HepG2 (cell line): ENCODE measurements at regions of chr13 and their contacts with region 1.

Region 1: DNA sequence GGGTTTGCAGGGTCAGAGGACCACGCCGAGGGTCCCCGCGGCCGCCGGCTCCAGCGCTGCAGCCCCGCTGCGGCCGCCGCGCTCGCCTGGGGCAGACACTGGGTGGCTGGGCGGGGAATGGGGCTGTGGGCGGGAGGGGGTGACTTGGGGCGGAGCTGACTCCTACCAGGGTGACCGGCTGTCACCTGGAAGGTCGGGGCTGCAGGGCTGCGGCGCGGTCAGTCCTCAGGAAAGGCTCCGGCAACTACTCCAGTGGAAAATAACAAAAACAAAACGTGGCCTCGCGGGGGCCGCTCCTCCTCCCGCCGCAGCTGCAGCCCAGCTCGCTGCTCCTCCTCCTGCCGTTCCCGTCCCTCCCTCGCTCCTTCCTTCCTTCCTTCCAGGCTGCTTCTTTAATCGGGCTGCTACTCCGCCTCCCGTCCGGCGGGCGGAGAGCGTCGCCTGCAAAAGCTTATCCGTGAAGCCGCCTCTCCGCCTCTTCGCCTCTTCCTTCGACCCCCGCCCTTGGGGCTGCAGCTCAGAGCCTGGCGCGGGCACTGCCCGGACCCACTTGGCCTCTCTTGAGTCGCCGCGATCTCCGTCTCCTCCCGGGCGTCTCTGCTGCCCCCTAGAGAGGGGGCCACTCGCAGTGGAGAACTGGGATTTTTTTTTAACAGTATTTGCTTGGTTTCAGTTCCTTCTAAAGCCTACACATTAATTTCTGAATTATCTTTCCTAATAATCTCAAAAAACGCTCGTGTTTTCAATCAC is at the start of gene TBC1D4:
- DNase-seq: peak; percentile 87
- ATAC-seq: peak; percentile 88
- H3K4me3 ChIP-seq: peak within 1 kb of the TSS; percentile 92 to 94 (median 93)
- H3K27ac ChIP-seq: peak within 1 kb of the TSS; percentile 91
- H3K4me1 ChIP-seq: peaks cover 50% of the 10 kb centered on the region
- H3K27me3 ChIP-seq: no peaks in the 10 kb centered on the region; a peak in 2 of 5 replicates
- CTCF ChIP-seq: peak; percentile 84
- EP300 ChIP-seq: peak in 1 of 2 experiments; percentile 58; a peak in 2 of 4 replicates
- POLR2A ChIP-seq: peak; percentile 51 to 77; a peak in 3 of 4 replicates
- RAD21 ChIP-seq: peak; percentile 85
- total RNA-seq, gene TBC1D4: 35.9 and 55.4 TPM in 2 replicates

Region 2: GRCh38 chr13:74056801-74057542 is 1425.3 kb before region 1 on chr13:
- CTCF ChIA-PET with region 1: no interaction called
- POLR2A ChIA-PET with region 1: no interaction called
- in situ Hi-C with region 1: no loop called
- intact Hi-C with region 1: no loop called
- DNase-seq: no peak
- ATAC-seq: no peak
- H3K4me3 ChIP-seq: no peak overlapping the region
- H3K27ac ChIP-seq: no peak overlapping the region
- H3K4me1 ChIP-seq: 0 out of 2 replicates have a peak, but pooled peaks cover 6% of the 10 kb centered on the region
- H3K27me3 ChIP-seq: no peaks in the 10 kb centered on the region
- CTCF ChIP-seq: no peak
- EP300 ChIP-seq: no peak
- POLR2A ChIP-seq: no peak
- RAD21 ChIP-seq: no peak

Region 3: DNA sequence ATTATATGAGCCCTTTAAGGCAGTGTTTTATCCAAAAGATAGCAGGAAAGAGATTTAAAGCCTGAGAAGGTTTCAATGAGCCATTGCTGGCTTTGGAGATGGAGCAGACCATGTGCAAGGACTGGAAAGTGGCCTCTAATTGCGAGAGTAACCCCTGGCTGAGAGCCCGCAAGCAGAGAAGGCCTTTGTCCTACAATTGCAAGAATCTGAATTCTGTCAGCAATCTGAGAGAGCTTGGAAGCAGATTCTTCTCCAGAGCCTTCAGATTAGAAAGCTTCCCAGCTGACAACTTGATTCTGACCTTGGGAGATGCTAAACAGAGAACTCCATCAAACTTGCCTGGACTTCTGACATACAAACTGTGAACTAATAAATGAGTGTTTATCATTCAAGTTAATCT is 819.3 kb before region 1 on chr13:
- CTCF ChIA-PET with region 1: no interaction called
- POLR2A ChIA-PET with region 1: no interaction called
- in situ Hi-C with region 1: no loop called
- intact Hi-C with region 1: no loop called
- DNase-seq: no peak
- ATAC-seq: no peak
- H3K4me3 ChIP-seq: no peak overlapping the region
- H3K27ac ChIP-seq: no peak overlapping the region
- H3K4me1 ChIP-seq: no peaks in the 10 kb centered on the region
- H3K27me3 ChIP-seq: no peaks in the 10 kb centered on the region
- CTCF ChIP-seq: no peak
- EP300 ChIP-seq: no peak
- POLR2A ChIP-seq: no peak
- RAD21 ChIP-seq: no peak

Region 4: DNA sequence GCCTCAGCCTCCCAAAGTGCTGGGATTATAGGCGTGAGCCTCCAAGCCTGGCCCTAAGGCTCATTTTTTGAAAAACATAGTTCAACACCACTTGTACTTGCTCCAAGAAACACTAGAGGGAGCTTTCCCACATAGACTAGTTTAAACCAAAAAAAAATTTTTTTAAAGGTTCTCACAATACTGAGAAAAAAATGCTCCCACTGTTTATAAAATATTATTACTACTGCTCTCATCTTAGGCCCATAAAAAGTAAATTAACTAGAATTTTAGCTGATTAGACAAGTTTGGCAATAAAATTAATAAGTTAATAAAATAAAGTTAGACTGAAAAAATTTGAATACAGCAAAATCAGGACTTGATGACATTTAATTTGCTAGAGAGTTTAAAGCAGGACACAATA is 109.7 kb before region 1 on chr13:
- CTCF ChIA-PET with region 1: interaction called, 4 read pairs
- POLR2A ChIA-PET with region 1: interaction called, 6 read pairs
- in situ Hi-C with region 1: loop called (anchors 5 kb)
- intact Hi-C with region 1: loop called (anchors 1 kb)
- DNase-seq: peak; percentile 44
- ATAC-seq: 0 out of 3 replicates have a peak, but pooled peaks have one; percentile 28
- H3K4me3 ChIP-seq: no peak overlapping the region
- H3K27ac ChIP-seq: peak overlapping the region; percentile 21
- H3K4me1 ChIP-seq: peaks cover 83% of the 10 kb centered on the region
- H3K27me3 ChIP-seq: no peaks in the 10 kb centered on the region
- CTCF ChIP-seq: peak; percentile 60
- EP300 ChIP-seq: no peak
- POLR2A ChIP-seq: no peak
- RAD21 ChIP-seq: 0 out of 2 replicates have a peak, but pooled peaks have one; percentile 29

Region 5: GRCh38 chr13:75440100-75440499 is 42.1 kb before region 1 on chr13:
- CTCF ChIA-PET with region 1: no interaction called
- POLR2A ChIA-PET with region 1: interaction called, 16 read pairs
- in situ Hi-C with region 1: no loop called
- intact Hi-C with region 1: loop called (anchors 5 kb)
- DNase-seq: peak; percentile 90
- ATAC-seq: peak; percentile 73
- H3K4me3 ChIP-seq: peak overlapping the region in 1 of 3 experiments; percentile 24; a peak in 1 of 6 replicates
- H3K27ac ChIP-seq: peak overlapping the region; percentile 67
- H3K4me1 ChIP-seq: peaks cover 78% of the 10 kb centered on the region
- H3K27me3 ChIP-seq: no peaks in the 10 kb centered on the region
- CTCF ChIP-seq: no peak
- EP300 ChIP-seq: peak in 1 of 2 experiments; percentile 83; a peak in 2 of 4 replicates
- POLR2A ChIP-seq: no peak
- RAD21 ChIP-seq: no peak

Region 6: DNA sequence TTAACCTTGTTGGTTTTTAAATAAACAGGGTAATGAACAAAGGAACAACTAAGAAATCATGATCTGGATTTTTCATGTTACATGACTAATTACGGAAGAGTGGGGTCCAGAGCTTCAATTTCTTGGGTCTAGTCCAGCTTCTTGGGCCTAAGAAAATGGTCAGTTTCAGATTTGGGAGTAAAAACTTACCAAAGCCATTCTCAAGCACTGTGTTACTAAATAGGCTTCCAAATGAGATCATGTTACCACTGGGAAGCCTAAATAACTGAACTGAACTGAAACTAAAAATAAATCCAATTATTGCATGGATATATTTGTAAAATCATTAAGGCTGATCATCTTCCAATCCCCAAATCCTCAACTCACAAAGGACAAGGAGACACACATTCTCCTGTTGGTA is 14.1 kb before region 1 on chr13:
- CTCF ChIA-PET with region 1: no interaction called
- POLR2A ChIA-PET with region 1: interaction called, 5 read pairs
- in situ Hi-C with region 1: no loop called
- intact Hi-C with region 1: loop called (anchors 1 kb)
- DNase-seq: no peak
- ATAC-seq: no peak
- H3K4me3 ChIP-seq: no peak overlapping the region
- H3K27ac ChIP-seq: peak overlapping the region; percentile 37
- H3K4me1 ChIP-seq: peaks cover 76% of the 10 kb centered on the region
- H3K27me3 ChIP-seq: no peaks in the 10 kb centered on the region
- CTCF ChIP-seq: no peak
- EP300 ChIP-seq: no peak
- POLR2A ChIP-seq: no peak
- RAD21 ChIP-seq: no peak

Region 7: DNA sequence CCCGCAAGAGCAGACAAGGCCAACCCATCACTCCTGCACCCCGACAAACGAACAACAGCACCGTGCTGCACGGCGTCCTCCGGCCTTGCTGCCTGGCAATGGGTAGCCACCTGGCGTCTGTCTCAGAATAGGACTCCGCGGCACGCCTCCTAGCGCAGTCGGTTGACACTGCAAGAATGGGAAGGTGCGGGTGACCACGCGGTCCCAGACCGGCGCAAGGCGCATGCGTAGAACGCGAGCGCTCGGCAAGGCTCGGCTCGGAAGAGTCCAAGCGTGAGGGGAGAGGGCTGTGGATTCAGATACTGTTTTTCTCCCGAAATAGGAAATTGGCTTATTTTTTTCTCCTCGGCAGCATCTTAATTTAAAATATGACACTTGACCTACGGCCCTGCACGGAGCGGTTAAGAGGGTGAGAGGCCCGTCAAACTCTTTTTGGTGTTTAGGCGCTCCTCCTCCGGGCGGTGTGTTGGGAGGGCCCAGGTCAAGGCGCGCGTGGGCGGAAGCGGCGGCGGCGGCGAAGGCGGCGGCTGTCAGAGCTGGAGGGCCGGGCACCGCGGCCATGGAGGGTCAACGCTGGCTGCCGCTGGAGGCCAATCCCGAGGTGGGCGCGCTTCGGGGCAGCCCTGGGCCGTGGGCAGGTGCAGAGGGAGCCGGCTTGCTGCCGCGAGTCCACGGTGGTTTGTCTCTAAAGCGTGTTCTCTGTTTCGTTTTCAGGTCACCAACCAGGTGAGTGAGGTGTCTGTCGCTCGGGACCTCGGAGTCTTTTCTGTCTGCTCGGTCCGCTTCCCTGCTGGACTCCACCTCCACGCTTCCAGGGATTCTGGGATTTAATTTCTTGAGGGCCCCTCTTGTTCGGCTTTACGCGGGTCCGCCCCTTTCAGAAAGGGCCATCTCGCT is 67.3 kb after region 1 on chr13 and contains the start of gene UCHL3:
- CTCF ChIA-PET with region 1: interaction called, 22 read pairs
- POLR2A ChIA-PET with region 1: interaction called, 14 read pairs
- in situ Hi-C with region 1: loop called (anchors 5 kb)
- intact Hi-C with region 1: loop called (anchors 1 kb)
- DNase-seq: peak; percentile 93
- ATAC-seq: peak; percentile 96
- H3K4me3 ChIP-seq: peak within 1 kb of the TSS; percentile 77 to 99 (median 94)
- H3K27ac ChIP-seq: peak within 1 kb of the TSS; percentile 88
- H3K4me1 ChIP-seq: peaks cover 44% of the 10 kb centered on the region
- H3K27me3 ChIP-seq: no peaks in the 10 kb centered on the region; a peak in 1 of 5 replicates
- CTCF ChIP-seq: peak; percentile 99
- EP300 ChIP-seq: 0 out of 4 replicates have a peak, but pooled peaks of 1 of the 2 experiments have one; percentile 19
- POLR2A ChIP-seq: peak; percentile 51 to 82
- RAD21 ChIP-seq: peak; percentile 96
- total RNA-seq, gene UCHL3: 93.3 and 123 TPM in 2 replicates

Region 8: GRCh38 chr13:75621147-75621546 is 138.9 kb after region 1 on chr13:
- CTCF ChIA-PET with region 1: no interaction called
- POLR2A ChIA-PET with region 1: no interaction called
- in situ Hi-C with region 1: no loop called
- intact Hi-C with region 1: no loop called
- DNase-seq: no peak
- ATAC-seq: no peak
- H3K4me3 ChIP-seq: no peak overlapping the region
- H3K27ac ChIP-seq: no peak overlapping the region
- H3K4me1 ChIP-seq: no peaks in the 10 kb centered on the region
- H3K27me3 ChIP-seq: no peaks in the 10 kb centered on the region
- CTCF ChIP-seq: no peak
- EP300 ChIP-seq: no peak
- POLR2A ChIP-seq: no peak
- RAD21 ChIP-seq: no peak

Region 9: GRCh38 chr13:77176350-77176749 is 1694.1 kb after region 1 on chr13:
- CTCF ChIA-PET with region 1: no interaction called
- POLR2A ChIA-PET with region 1: no interaction called
- in situ Hi-C with region 1: no loop called
- intact Hi-C with region 1: no loop called
- DNase-seq: peak; percentile 3
- ATAC-seq: no peak
- H3K4me3 ChIP-seq: no peak overlapping the region
- H3K27ac ChIP-seq: no peak overlapping the region
- H3K4me1 ChIP-seq: no peaks in the 10 kb centered on the region
- H3K27me3 ChIP-seq: no peaks in the 10 kb centered on the region
- CTCF ChIP-seq: no peak
- EP300 ChIP-seq: no peak
- POLR2A ChIP-seq: no peak
- RAD21 ChIP-seq: no peak